ENCODE measurements at regions of chr3 and their contacts with region 1.

Region 1: DNA sequence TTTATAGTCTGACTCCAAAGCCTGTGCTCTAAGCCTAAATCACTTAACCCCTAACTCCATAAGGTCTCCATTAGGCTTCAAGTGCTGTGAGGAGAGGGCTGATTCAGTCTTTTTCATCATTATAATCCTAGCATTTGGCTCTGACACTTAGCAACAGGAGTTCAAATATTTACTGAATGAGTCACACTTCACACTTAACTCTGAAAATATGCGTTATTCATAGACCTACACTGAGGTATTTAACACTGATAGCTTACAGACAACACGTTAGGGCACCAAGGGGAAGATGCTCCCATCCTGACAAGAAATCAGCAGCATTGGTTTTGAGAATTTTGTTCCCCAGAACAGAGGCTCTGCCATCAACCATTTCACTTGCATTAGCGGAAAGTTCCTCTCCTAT is 53.5 kb downstream of the MSL2 start:
- DNase-seq: peak; percentile 73
- ATAC-seq: peak; percentile 82
- H3K4me3 ChIP-seq: peak overlapping the region in 1 of 2 experiments; percentile 10; a peak in 1 of 4 replicates
- H3K27ac ChIP-seq: peak overlapping the region; percentile 41; the same call in 1 of the 2 replicates
- H3K4me1 ChIP-seq: peaks cover 29 to 44% of the 10 kb centered on the region in 2 experiments
- H3K27me3 ChIP-seq: no peaks in the 10 kb centered on the region
- CTCF ChIP-seq: no peak
- POLR2A ChIP-seq: no peak
- RAD21 ChIP-seq: 0 out of 2 replicates have a peak, but pooled peaks have one; percentile 21

Region 2: DNA sequence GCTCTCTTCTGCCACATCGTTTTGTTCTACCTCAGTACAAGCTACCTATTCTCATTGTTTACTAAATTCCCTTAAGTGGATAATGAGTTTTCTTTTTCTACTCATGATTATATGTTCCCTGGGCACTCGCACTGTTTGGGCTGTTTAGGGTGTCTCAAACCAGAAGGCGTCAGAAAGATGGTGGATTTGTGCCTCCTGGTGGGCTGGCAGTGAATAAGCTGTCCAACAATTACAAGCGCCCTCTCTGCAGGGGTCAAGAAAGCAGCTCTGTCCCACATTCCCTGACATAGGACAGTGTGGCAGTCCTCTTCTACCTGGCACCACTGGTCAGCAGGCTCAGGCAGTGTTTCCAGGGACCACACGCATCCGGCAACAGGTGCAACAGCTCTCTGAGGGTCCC is 350.4 kb before region 1 on chr3:
- CTCF ChIA-PET with region 1: no interaction called
- POLR2A ChIA-PET with region 1: no interaction called
- RAD21 ChIA-PET with region 1: no interaction called
- intact Hi-C with region 1: no loop called
- DNase-seq: no peak
- ATAC-seq: peak; percentile 58; the same call in 1 of the 2 replicates
- H3K4me3 ChIP-seq: no peak overlapping the region
- H3K27ac ChIP-seq: no peak overlapping the region
- H3K4me1 ChIP-seq: no peaks in the 10 kb centered on the region
- H3K27me3 ChIP-seq: peaks cover 35% of the 10 kb centered on the region; the same call in 1 of the 2 replicates
- CTCF ChIP-seq: peak in 2 of 3 experiments; percentile 24 to 43; a peak in 3 of 6 replicates
- POLR2A ChIP-seq: no peak
- RAD21 ChIP-seq: peak; percentile 43

Region 3: DNA sequence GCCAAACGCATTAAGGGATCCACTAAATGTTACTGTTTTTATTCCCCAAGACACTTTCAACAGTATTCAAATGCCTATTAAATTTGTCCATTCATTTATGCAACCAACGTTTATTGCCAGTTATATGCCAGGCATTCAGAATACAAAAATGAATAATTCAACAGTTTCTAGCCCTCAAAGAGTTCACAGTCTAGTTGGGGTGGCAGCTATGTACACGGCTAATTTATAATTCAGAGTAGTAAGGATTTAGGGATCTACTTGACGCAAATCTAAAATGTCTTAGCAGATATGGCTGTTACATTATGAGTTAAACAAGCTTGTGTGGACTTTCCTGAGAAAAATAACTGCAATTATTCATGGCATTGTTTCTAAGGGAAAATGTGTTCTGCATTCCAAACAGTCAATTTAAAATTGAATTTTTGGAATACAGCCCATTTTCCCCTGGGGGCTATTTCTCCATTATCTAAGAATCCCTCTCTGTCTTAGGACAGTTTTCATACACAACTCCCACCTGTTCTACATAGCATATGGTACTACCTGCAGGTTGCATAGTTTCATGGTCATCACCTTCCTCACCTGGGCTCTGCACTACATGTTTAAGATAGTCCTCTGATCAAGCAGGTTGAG is 65.0 kb after region 1 on chr3:
- CTCF ChIA-PET with region 1: no interaction called
- POLR2A ChIA-PET with region 1: no interaction called
- RAD21 ChIA-PET with region 1: no interaction called
- intact Hi-C with region 1: no loop called
- DNase-seq: no peak
- ATAC-seq: no peak
- H3K4me3 ChIP-seq: no peak overlapping the region
- H3K27ac ChIP-seq: no peak overlapping the region
- H3K4me1 ChIP-seq: no peaks in the 10 kb centered on the region; a peak in 1 of 4 replicates
- H3K27me3 ChIP-seq: no peaks in the 10 kb centered on the region
- CTCF ChIP-seq: no peak
- POLR2A ChIP-seq: no peak
- RAD21 ChIP-seq: no peak

Region 4: GRCh38 chr3:136250226-136250902 is 107.8 kb after region 1 on chr3 and contains the start of gene PCCB:
- CTCF ChIA-PET with region 1: no interaction called
- POLR2A ChIA-PET with region 1: no interaction called
- RAD21 ChIA-PET with region 1: no interaction called
- intact Hi-C with region 1: loop called (anchors 5 kb)
- DNase-seq: peak; percentile 90
- ATAC-seq: peak; percentile 99
- H3K4me3 ChIP-seq: peak within 1 kb of the TSS; percentile 71 to 73
- H3K27ac ChIP-seq: peak within 1 kb of the TSS; percentile 70
- H3K4me1 ChIP-seq: peaks cover 18 to 23% of the 10 kb centered on the region in 2 experiments
- H3K27me3 ChIP-seq: no peaks in the 10 kb centered on the region
- CTCF ChIP-seq: peak in 2 of 3 experiments; percentile 56 to 59; a peak in 4 of 6 replicates
- POLR2A ChIP-seq: peak; percentile 59
- RAD21 ChIP-seq: peak; percentile 46; the same call in 1 of the 2 replicates
- total RNA-seq, gene PCCB: 48.9 TPM